ENCODE measurements at regions of chr20 and their contacts with region 1.

Region 1: GRCh38 chr20:1674361-1674760 is 16.8 kb upstream of the SIRPG start:
- DNase-seq: peak; percentile 81
- ATAC-seq: peak; percentile 86
- H3K4me3 Mint-ChIP-seq: peak overlapping the region; percentile 52
- H3K27ac Mint-ChIP-seq: peak overlapping the region; percentile 87
- H3K4me1 Mint-ChIP-seq: peaks cover 99% of the 10 kb centered on the region
- H3K27me3 Mint-ChIP-seq: no peaks in the 10 kb centered on the region

Region 2: DNA sequence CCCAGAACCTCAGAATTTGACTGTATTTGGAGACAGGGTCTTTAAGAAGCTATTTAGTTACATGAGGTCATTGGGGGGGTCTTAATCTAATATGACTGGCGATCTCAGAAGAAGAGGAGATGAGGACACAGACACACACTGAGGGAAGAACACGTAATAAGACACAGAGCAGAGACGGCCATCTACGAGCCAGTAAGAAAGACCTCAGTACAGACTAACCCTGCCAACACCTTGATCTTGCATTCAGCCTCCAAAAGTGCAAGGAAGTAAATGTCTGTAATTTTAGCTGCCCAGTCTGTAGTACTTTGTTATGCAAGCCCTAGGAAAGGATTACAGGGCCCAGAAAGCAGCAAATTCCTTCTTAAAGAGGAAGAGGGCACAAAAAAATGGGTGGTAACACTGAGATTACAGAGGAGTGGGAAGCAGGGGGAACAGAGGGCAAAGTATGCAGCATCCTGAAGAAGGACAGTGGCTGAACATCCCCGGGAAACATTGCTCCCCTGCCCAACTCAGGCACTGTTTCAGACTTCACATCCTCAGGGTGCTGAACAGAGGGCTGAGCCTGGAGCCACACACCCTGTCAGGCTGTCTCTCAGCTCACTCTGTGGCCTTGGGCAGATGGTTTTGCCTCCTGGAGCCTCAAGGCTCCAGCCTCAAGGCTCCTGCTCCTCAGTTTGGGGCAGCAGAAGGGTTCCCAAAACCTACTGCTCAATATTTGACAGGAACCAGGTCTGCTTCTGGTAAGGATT is 11.1 kb after region 1 on chr20:
- CTCF ChIA-PET with region 1: interaction called, 3 read pairs
- POLR2A ChIA-PET with region 1: interaction called, 38 read pairs
- DNase-seq: peak; percentile 47
- ATAC-seq: peak; percentile 77
- H3K4me3 Mint-ChIP-seq: peak overlapping the region; percentile 73
- H3K27ac Mint-ChIP-seq: peak overlapping the region; percentile 84
- H3K4me1 Mint-ChIP-seq: peaks cover 66% of the 10 kb centered on the region
- H3K27me3 Mint-ChIP-seq: no peaks in the 10 kb centered on the region

Region 3: GRCh38 chr20:1707588-1708449 is 33.5 kb after region 1 on chr20:
- CTCF ChIA-PET with region 1: no interaction called
- POLR2A ChIA-PET with region 1: no interaction called
- DNase-seq: no peak
- ATAC-seq: no peak
- H3K4me3 Mint-ChIP-seq: no peak overlapping the region
- H3K27ac Mint-ChIP-seq: peak overlapping the region; percentile 74
- H3K4me1 Mint-ChIP-seq: peaks cover 18% of the 10 kb centered on the region
- H3K27me3 Mint-ChIP-seq: peaks cover 2% of the 10 kb centered on the region